Tibial artery (tissue), 4 donors: ENCODE measurements at regions of chr14 and their contacts with region 1.

Region 1: GRCh38 chr14:71320107-71320733 is 413.0 kb downstream of the PCNX1 start:
- DNase-seq: peak; percentile 96 to 99
- H3K4me3 ChIP-seq: peak within 1 kb of the TSS; percentile 91 to 98
- H3K27ac ChIP-seq: peak within 1 kb of the TSS; percentile 99 to 100
- H3K4me1 ChIP-seq: peaks cover 0 to 23% (median 12%) of the 10 kb centered on the region in 4 donors
- H3K27me3 ChIP-seq: no peaks in the 10 kb centered on the region
- CTCF ChIP-seq: peak; percentile 4 to 20

Region 2: GRCh38 chr14:71358209-71358931 is 38.1 kb after region 1 on chr14:
- intact Hi-C with region 1: loop called (anchors 2 kb)
- DNase-seq: no peak
- H3K4me3 ChIP-seq: no peak overlapping the region
- H3K27ac ChIP-seq: peak overlapping the region; percentile 62
- H3K4me1 ChIP-seq: peaks cover 0 to 78% (median 33%) of the 10 kb centered on the region in 4 donors
- H3K27me3 ChIP-seq: no peaks in the 10 kb centered on the region
- CTCF ChIP-seq: no peak

Region 3: GRCh38 chr14:71488703-71489191 is 168.5 kb after region 1 on chr14:
- intact Hi-C with region 1: no loop called
- DNase-seq: no peak
- H3K4me3 ChIP-seq: no peak overlapping the region
- H3K27ac ChIP-seq: peak overlapping the region; percentile 33 to 58
- H3K4me1 ChIP-seq: peaks cover 0 to 94% (median 48%) of the 10 kb centered on the region in 4 donors
- H3K27me3 ChIP-seq: no peaks in the 10 kb centered on the region
- CTCF ChIP-seq: no peak

Region 4: GRCh38 chr14:71720978-71721624 is 400.9 kb after region 1 on chr14:
- intact Hi-C with region 1: loop called (anchors 5 kb)
- DNase-seq: no peak
- H3K4me3 ChIP-seq: no peak overlapping the region
- H3K27ac ChIP-seq: peak overlapping the region; percentile 33 to 53
- H3K4me1 ChIP-seq: peaks cover 0 to 29% (median 21%) of the 10 kb centered on the region in 4 donors
- H3K27me3 ChIP-seq: no peaks in the 10 kb centered on the region
- CTCF ChIP-seq: peak; percentile 44

Region 5: DNA sequence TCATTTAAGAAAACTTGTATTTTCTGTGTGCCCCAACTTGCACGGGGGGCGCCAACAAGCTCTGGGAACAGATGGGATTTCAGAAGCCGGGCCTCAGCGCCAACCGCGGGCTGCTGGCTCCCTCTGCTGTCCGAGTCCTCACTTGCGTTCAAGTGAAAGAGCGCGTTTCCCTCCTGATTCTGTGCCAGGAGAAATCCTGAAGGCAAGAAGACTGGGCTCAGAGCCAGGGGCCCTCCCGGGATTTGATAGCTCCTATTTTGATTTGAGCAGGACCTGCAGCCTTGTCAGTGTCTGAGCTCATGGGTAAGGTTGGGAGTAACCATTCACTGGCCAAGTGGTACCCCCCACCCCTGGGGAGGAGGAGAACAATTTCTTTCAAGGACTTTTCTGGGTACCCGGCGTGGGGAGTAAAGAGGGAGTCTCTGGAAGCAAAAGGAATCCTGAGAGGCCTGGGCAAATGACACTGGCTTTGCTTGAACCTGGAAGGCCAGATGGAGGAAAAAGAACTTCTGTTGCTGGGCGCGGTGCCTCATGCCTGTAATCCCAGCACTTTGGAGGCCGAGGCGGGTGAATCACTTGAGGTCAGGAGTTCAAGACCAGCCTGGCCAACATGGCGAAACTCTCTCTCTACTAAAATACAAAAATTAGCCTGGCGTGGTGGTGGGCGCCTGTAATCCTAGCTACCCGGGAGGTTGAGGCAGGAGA is 433.1 kb after region 1 on chr14:
- intact Hi-C with region 1: loop called (anchors 5 kb)
- DNase-seq: peak; percentile 91 to 93
- H3K4me3 ChIP-seq: peak overlapping the region in 1 of 2 donors; percentile 29
- H3K27ac ChIP-seq: peak overlapping the region; percentile 31 to 41
- H3K4me1 ChIP-seq: peaks cover 0 to 11% (median 6%) of the 10 kb centered on the region in 4 donors
- H3K27me3 ChIP-seq: no peaks in the 10 kb centered on the region
- CTCF ChIP-seq: peak; percentile 89 to 96